GM12878 (cell line): ENCODE measurements at regions of chr6 and their contacts with region 1.

Region 1: GRCh38 chr6:127855542-127856159 is 45.2 kb downstream of the THEMIS start:
- DNase-seq: no peak
- ATAC-seq: peak; percentile 82
- H3K4me3 ChIP-seq: no peak overlapping the region
- H3K27ac ChIP-seq: no peak overlapping the region
- H3K4me1 ChIP-seq: no peaks in the 10 kb centered on the region
- H3K27me3 ChIP-seq: no peaks in the 10 kb centered on the region
- CTCF ChIP-seq: peak; percentile 29 to 49 (median 35); a peak in 4 of 6 replicates
- EP300 ChIP-seq: no peak
- POLR2A ChIP-seq: no peak
- RAD21 ChIP-seq: peak; percentile 48

Region 2: GRCh38 chr6:127792616-127793015 is 63.0 kb before region 1 on chr6:
- CTCF ChIA-PET with region 1: no interaction called
- POLR2A ChIA-PET with region 1: no interaction called
- RAD21 ChIA-PET with region 1: no interaction called
- SMC1A ChIA-PET with region 1: no interaction called
- in situ Hi-C with region 1: no loop called
- intact Hi-C with region 1: no loop called
- DNase-seq: no peak
- ATAC-seq: no peak
- H3K4me3 ChIP-seq: no peak overlapping the region
- H3K27ac ChIP-seq: no peak overlapping the region
- H3K4me1 ChIP-seq: no peaks in the 10 kb centered on the region
- H3K27me3 ChIP-seq: no peaks in the 10 kb centered on the region
- CTCF ChIP-seq: no peak
- EP300 ChIP-seq: no peak
- POLR2A ChIP-seq: no peak
- RAD21 ChIP-seq: no peak

Region 3: DNA sequence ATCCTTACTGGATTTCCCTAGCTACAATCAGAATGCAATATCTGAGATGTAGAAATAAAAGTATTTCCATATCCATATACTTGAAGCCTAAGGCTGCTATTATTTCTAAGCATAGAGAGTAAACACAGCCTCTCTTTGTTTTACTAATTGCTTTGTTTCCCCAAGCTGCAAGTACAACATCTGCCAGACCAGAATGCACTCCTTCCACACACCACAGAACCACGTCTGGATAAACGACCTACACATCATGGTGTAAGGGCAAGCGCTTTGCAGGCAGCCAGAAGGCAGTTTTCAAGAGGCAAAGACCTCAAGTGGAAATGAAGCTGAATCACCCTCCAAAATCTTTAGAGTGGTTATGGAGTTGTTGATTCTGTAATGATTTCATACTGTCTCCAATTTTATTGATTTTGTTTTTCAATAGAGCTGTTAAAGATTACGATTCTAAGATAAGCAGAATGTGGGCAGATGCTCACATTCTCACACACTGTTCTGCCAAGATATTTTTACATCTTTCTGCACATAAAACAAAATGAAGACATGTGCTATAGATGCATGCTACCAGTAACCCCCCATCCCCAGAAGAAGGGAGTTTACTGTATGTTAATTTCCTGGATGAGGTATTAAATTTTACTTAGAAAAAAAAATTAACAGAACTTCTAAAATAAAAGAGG is 43.6 kb before region 1 on chr6:
- CTCF ChIA-PET with region 1: no interaction called
- POLR2A ChIA-PET with region 1: no interaction called
- RAD21 ChIA-PET with region 1: no interaction called
- SMC1A ChIA-PET with region 1: no interaction called
- in situ Hi-C with region 1: no loop called
- intact Hi-C with region 1: no loop called
- DNase-seq: no peak
- ATAC-seq: no peak
- H3K4me3 ChIP-seq: no peak overlapping the region
- H3K27ac ChIP-seq: no peak overlapping the region
- H3K4me1 ChIP-seq: no peaks in the 10 kb centered on the region
- H3K27me3 ChIP-seq: no peaks in the 10 kb centered on the region
- CTCF ChIP-seq: no peak
- EP300 ChIP-seq: no peak
- POLR2A ChIP-seq: no peak
- RAD21 ChIP-seq: no peak

Region 4: DNA sequence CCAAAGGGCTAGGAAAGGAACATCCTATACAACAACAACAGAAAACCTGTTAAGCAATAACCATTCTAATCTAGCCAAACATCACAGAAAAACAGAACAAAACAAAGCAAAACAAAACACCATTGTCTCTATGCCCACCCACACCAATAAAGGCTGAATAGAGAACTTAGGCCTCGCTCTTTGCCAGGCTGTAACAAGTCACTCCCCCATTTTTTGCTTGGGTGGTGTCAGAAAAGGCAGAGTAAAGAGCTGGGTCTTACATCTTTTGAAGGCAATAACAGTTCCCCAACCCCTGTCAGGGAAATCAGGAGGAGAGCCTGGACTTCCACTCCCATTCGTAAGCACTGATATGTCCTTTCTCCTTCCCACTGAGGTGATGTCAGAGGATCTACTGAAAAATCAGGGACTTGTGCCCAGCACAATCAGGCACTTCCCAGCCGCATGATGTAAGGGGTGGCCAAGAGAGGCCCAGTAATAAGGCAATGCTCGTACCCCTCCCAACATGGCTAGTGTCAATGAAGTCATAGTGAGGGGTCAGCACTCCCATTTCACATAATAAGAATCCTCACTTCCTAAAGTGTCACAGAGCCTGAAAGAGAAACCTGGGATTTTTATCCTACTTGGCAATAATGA is 14.2 kb after region 1 on chr6:
- CTCF ChIA-PET with region 1: interaction called, 10 read pairs
- POLR2A ChIA-PET with region 1: no interaction called
- RAD21 ChIA-PET with region 1: interaction called, 5 read pairs
- SMC1A ChIA-PET with region 1: interaction called, 7 read pairs
- in situ Hi-C with region 1: no loop called
- intact Hi-C with region 1: no loop called
- DNase-seq: no peak
- ATAC-seq: no peak
- H3K4me3 ChIP-seq: no peak overlapping the region
- H3K27ac ChIP-seq: no peak overlapping the region
- H3K4me1 ChIP-seq: no peaks in the 10 kb centered on the region
- H3K27me3 ChIP-seq: no peaks in the 10 kb centered on the region
- CTCF ChIP-seq: no peak
- EP300 ChIP-seq: no peak
- POLR2A ChIP-seq: no peak
- RAD21 ChIP-seq: no peak

Region 5: DNA sequence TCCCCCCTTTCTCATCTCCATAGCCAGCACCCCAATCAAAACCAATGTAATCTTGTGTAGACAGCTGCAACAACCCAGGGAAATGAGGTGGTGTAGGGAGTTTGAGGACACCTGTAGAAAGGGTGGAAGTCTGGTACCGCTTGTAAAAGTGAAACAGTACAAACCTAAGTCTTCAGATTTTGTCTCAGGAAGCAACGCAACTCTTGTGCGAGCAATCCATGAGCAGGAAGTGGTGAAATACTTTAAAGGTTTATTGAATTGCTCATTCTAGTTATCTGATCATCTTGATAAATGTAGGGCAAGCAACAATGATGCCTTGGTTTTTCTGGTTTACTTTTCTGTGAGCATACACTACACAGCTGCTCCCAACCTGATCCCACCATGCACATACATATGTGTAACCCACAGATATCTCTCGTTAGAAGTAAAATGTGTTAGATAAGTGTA is 116.3 kb after region 1 on chr6:
- CTCF ChIA-PET with region 1: interaction called, 12 read pairs
- POLR2A ChIA-PET with region 1: no interaction called
- RAD21 ChIA-PET with region 1: no interaction called
- SMC1A ChIA-PET with region 1: interaction called, 5 read pairs
- in situ Hi-C with region 1: no loop called
- intact Hi-C with region 1: no loop called
- DNase-seq: no peak
- ATAC-seq: peak; percentile 78
- H3K4me3 ChIP-seq: no peak overlapping the region
- H3K27ac ChIP-seq: no peak overlapping the region
- H3K4me1 ChIP-seq: no peaks in the 10 kb centered on the region
- H3K27me3 ChIP-seq: no peaks in the 10 kb centered on the region
- CTCF ChIP-seq: no peak
- EP300 ChIP-seq: no peak
- POLR2A ChIP-seq: no peak
- RAD21 ChIP-seq: no peak

Region 6: GRCh38 chr6:128327890-128328289 is 472.2 kb after region 1 on chr6:
- CTCF ChIA-PET with region 1: interaction called, 25 read pairs
- POLR2A ChIA-PET with region 1: no interaction called
- RAD21 ChIA-PET with region 1: interaction called, 41 read pairs
- SMC1A ChIA-PET with region 1: interaction called, 24 read pairs
- in situ Hi-C with region 1: loop called (anchors 10 kb)
- intact Hi-C with region 1: loop called (anchors 1 kb)
- DNase-seq: no peak
- ATAC-seq: peak; percentile 97
- H3K4me3 ChIP-seq: no peak overlapping the region
- H3K27ac ChIP-seq: no peak overlapping the region
- H3K4me1 ChIP-seq: no peaks in the 10 kb centered on the region
- H3K27me3 ChIP-seq: no peaks in the 10 kb centered on the region
- CTCF ChIP-seq: peak; percentile 61 to 74 (median 70)
- EP300 ChIP-seq: no peak
- POLR2A ChIP-seq: no peak
- RAD21 ChIP-seq: peak; percentile 77

Region 7: DNA sequence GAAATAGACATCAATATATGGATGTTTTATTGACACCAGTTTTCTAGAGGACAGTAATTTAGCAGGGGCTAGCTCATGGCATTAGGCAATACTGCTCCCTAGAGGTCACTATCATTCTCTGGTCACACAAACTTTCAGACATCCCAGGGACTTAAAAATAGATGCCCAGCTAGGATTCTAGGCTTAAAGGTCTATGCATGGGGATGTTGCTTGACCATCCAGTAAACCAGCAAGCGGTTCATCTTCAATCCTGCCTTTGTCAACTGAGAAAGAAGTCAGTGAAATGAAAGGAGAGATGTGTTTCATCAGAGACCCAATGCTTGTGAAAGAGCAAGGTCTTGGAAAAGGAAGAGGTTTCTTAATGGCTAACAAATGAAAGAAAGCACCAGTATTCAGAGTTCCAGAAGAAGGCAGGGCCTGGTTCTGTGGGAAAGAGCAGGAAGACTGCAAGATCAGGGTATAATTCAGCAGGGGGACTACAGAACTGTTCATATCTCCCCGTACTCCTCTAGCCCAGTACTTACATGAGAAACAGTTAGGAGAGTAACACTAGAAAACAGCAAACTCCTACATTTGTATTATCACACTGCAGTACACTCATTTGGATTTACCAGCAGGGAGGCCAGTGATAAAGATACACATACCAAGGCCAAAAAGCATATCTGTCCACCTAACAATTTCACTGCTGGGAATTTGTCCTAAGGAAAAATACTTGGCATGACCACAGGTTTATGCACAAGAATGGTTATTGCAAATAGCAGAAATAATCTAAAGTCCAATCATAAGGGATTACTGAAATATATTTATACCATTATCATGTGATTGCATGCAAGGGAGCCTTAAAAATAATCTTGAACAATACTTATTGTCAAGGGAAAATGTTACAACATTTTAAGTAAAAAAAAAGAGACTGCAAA is 875.9 kb after region 1 on chr6:
- CTCF ChIA-PET with region 1: interaction called, 3 read pairs
- POLR2A ChIA-PET with region 1: no interaction called
- RAD21 ChIA-PET with region 1: interaction called, 5 read pairs
- SMC1A ChIA-PET with region 1: interaction called, 10 read pairs
- in situ Hi-C with region 1: no loop called
- intact Hi-C with region 1: loop called (anchors 2 kb)
- DNase-seq: no peak
- ATAC-seq: peak; percentile 77
- H3K4me3 ChIP-seq: no peak overlapping the region
- H3K27ac ChIP-seq: no peak overlapping the region
- H3K4me1 ChIP-seq: no peaks in the 10 kb centered on the region
- H3K27me3 ChIP-seq: no peaks in the 10 kb centered on the region
- CTCF ChIP-seq: peak; percentile 37 to 63 (median 43); a peak in 4 of 6 replicates
- EP300 ChIP-seq: no peak
- POLR2A ChIP-seq: no peak
- RAD21 ChIP-seq: peak; percentile 64